Right lobe of liver (tissue), 6 donors: ENCODE measurements at regions of chr9 and their contacts with region 1.

Region 1: GRCh38 chr9:127734747-127735529 is at the start of gene TOR2A:
- DNase-seq: peak; percentile 98
- ATAC-seq: peak; percentile 95 to 98 (median 96)
- H3K4me3 ChIP-seq: peak within 1 kb of the TSS; percentile 79 to 89 (median 87)
- H3K27ac ChIP-seq: peak within 1 kb of the TSS; percentile 63 to 90 (median 86)
- H3K4me1 ChIP-seq: peaks cover 0 to 6% (median 3%) of the 10 kb centered on the region in 4 donors
- H3K27me3 ChIP-seq: no peaks in the 10 kb centered on the region
- CTCF ChIP-seq: peak; percentile 92 to 98 (median 94)
- POLR2A ChIP-seq: peak; percentile 92
- total RNA-seq, gene TOR2A: 6.1 to 15.3 (median 7.7) TPM

Region 2: DNA sequence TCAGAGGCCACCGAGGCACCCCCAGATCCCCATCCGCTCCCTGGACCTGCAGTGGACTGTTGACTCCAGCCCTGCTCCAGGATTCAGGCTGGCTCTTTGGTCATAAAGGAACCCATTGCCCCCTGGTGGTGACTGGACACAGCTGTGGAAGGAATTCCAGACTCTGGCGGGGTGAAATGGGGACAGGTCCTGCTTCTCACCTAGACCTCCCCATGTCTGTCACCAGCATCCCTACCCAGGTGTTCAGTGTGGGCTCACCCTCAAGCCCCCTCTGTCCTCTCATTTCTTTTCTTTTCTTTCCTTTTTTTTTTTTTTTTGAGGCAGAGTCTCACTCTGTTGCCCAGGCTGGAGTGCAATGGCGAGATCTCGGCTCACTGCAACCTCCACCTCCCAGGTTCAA is 148.4 kb before region 1 on chr9:
- intact Hi-C with region 1: loop called (anchors 5 kb)
- DNase-seq: peak; percentile 73 to 82 (median 75)
- ATAC-seq: peak; percentile 91 to 95 (median 94)
- H3K4me3 ChIP-seq: no peak overlapping the region
- H3K27ac ChIP-seq: no peak overlapping the region
- H3K4me1 ChIP-seq: peaks cover 0 to 4% (median under 1%) of the 10 kb centered on the region in 4 donors
- H3K27me3 ChIP-seq: no peaks in the 10 kb centered on the region
- CTCF ChIP-seq: peak; percentile 81 to 89 (median 84)
- POLR2A ChIP-seq: no peak

Region 3: GRCh38 chr9:127869310-127870152 is 134.6 kb after region 1 on chr9:
- intact Hi-C with region 1: loop called in 1 of 2 experiments (anchors 10 kb)
- DNase-seq: peak; percentile 86 to 91 (median 90)
- ATAC-seq: peak; percentile 83 to 92 (median 86)
- H3K4me3 ChIP-seq: no peak overlapping the region
- H3K27ac ChIP-seq: no peak overlapping the region
- H3K4me1 ChIP-seq: peaks cover 0 to 13% (median 6%) of the 10 kb centered on the region in 4 donors
- H3K27me3 ChIP-seq: no peaks in the 10 kb centered on the region
- CTCF ChIP-seq: peak; percentile 83 to 94 (median 86)
- POLR2A ChIP-seq: no peak

Region 4: DNA sequence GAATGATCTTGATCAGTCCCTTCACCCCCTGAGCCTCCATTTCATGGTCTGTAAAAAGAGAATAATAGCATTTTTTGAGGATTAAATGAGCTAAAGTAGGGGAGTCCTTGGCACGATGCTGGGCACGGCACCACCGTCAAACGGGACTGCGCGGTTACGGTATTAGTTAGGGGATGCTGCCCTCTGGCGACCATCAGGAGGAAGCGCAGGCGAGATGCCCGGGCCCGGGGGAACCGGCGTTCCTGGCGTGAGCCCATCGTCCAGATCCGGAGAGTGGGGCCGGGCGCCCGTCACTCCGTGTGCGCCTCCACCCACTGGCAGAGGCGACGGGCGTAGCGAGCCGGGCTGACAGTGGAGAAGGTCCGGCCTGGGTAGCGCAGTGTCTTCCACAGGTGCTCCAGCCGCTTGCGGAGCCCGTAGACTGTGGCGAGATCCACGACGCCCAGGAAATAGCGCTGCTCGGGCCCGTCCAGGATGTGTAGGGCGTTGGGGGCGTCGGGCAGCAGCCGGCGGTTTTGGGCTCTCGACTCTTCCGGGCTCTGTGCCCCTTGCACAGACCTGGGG is 186.7 kb after region 1 on chr9:
- intact Hi-C with region 1: loop called in 1 of 2 experiments (anchors 5 kb)
- DNase-seq: peak; percentile 76 to 81 (median 77)
- ATAC-seq: peak; percentile 44 to 54 (median 52)
- H3K4me3 ChIP-seq: peak overlapping the region in 1 of 3 donors; percentile 21
- H3K27ac ChIP-seq: no peak overlapping the region
- H3K4me1 ChIP-seq: peaks cover 0 to 29% (median 3%) of the 10 kb centered on the region in 4 donors
- H3K27me3 ChIP-seq: no peaks in the 10 kb centered on the region
- CTCF ChIP-seq: peak; percentile 96 to 98 (median 97)
- POLR2A ChIP-seq: no peak

Region 5: DNA sequence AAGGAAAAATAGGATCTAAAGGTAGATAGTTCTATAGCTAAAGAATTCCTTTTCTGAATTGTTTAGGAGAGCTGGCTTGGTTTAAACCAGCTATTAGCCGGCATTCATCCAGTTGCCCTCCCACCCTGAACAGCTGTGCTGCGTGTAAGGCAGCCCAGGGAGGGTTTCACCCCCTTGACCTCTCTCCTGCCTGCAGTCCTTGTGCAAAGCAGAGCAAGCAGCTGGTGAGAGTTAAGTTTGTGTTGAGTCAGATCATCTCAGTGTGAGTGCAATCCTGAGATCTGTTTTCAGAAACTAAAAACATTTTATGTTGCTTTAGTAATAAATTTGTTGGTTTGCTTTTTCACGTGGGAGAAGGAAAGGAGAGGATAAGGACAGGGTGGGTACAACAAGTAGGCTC is 346.1 kb after region 1 on chr9:
- intact Hi-C with region 1: no loop called
- DNase-seq: no peak
- ATAC-seq: peak in 1 of 4 donors; percentile 27
- H3K4me3 ChIP-seq: no peak overlapping the region
- H3K27ac ChIP-seq: no peak overlapping the region
- H3K4me1 ChIP-seq: peaks cover 0 to 40% (median 7%) of the 10 kb centered on the region in 4 donors
- H3K27me3 ChIP-seq: no peaks in the 10 kb centered on the region
- CTCF ChIP-seq: no peak
- POLR2A ChIP-seq: no peak